ENCODE measurements at regions of chr15 and their contacts with region 1.

Region 1: GRCh38 chr15:34360310-34360709 is 6.7 kb downstream of the LPCAT4 start:
- DNase-seq: no peak
- H3K4me3 ChIP-seq: no peak overlapping the region
- H3K27ac ChIP-seq: no peak overlapping the region
- H3K27me3 ChIP-seq: no peaks in the 10 kb centered on the region
- CTCF ChIP-seq: no peak

Region 2: DNA sequence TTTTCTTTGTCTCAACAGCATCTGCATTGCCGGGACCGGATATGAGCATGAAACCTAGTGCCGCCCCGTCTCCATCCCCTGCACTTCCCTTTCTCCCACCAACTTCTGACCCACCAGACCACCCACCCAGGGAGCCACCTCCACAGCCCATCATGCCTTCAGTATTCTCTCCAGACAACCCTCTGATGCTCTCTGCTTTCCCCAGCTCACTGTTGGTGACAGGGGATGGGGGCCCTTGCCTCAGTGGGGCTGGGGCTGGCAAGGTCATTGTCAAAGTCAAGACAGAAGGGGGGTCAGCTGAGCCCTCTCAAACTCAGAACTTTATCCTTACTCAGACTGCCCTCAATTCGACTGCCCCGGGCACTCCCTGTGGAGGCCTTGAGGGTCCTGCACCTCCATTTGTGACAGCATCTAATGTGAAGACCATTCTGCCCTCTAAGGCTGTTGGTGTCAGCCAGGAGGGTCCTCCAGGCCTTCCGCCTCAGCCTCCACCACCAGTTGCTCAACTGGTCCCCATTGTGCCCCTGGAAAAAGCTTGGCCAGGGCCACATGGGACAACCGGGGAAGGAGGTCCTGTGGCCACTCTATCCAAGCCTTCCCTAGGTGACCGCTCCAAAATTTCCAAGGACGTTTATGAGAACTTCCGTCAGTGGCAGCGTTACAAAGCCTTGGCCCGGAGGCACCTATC is 12.2 kb before region 1 on chr15:
- intact Hi-C with region 1: loop called in 1 of 2 experiments (anchors 2 kb)
- DNase-seq: no peak
- H3K4me3 ChIP-seq: no peak overlapping the region
- H3K27ac ChIP-seq: no peak overlapping the region
- H3K27me3 ChIP-seq: no peaks in the 10 kb centered on the region
- CTCF ChIP-seq: no peak

Region 3: GRCh38 chr15:34637305-34637704 is 277.0 kb after region 1 on chr15:
- intact Hi-C with region 1: no loop called
- DNase-seq: no peak
- H3K4me3 ChIP-seq: no peak overlapping the region
- H3K27ac ChIP-seq: no peak overlapping the region
- H3K27me3 ChIP-seq: peaks cover 0 to 5% (median 0%) of the 10 kb centered on the region in 45 donors
- CTCF ChIP-seq: no peak

Region 4: GRCh38 chr15:34810455-34811146 is 450.3 kb after region 1 on chr15:
- intact Hi-C with region 1: no loop called
- DNase-seq: no peak
- H3K4me3 ChIP-seq: no peak overlapping the region
- H3K27ac ChIP-seq: no peak overlapping the region
- H3K27me3 ChIP-seq: peaks cover 0 to 5% (median 0%) of the 10 kb centered on the region in 45 donors
- CTCF ChIP-seq: no peak